PC-9 (cell line): ENCODE measurements at regions of chr1 and their contacts with region 1.

Region 1: GRCh38 chr1:91777630-91778300 is 108.2 kb downstream of the TGFBR3 start:
- DNase-seq: no peak
- H3K4me3 ChIP-seq: no peak overlapping the region
- H3K27ac ChIP-seq: no peak overlapping the region
- H3K4me1 ChIP-seq: no peaks in the 10 kb centered on the region
- H3K27me3 ChIP-seq: no peaks in the 10 kb centered on the region
- CTCF ChIP-seq: no peak

Region 2: GRCh38 chr1:91500756-91501522 is 276.8 kb before region 1 on chr1 and contains the start of gene CDC7:
- CTCF ChIA-PET with region 1: interaction called, 12 read pairs
- POLR2A ChIA-PET with region 1: no interaction called
- intact Hi-C with region 1: no loop called
- DNase-seq: peak; percentile 78 to 87
- H3K4me3 ChIP-seq: peak within 1 kb of the TSS; percentile 70
- H3K27ac ChIP-seq: peak within 1 kb of the TSS; percentile 56
- H3K4me1 ChIP-seq: peaks cover 23% of the 10 kb centered on the region
- H3K27me3 ChIP-seq: no peaks in the 10 kb centered on the region
- CTCF ChIP-seq: peak; percentile 82
- total RNA-seq, gene CDC7: 11.5 and 13.1 TPM in 2 replicates